Transverse colon (tissue), 4 donors: ENCODE measurements at regions of chr9 and their contacts with region 1.

Region 1: GRCh38 chr9:82091610-82092009 is 103.0 kb downstream of the SPATA31D1 start:
- DNase-seq: no peak
- H3K4me3 ChIP-seq: no peak overlapping the region
- H3K27ac ChIP-seq: no peak overlapping the region
- H3K4me1 ChIP-seq: no peaks in the 10 kb centered on the region
- H3K27me3 ChIP-seq: no peaks in the 10 kb centered on the region
- CTCF ChIP-seq: no peak
- EP300 ChIP-seq: no peak
- POLR2A ChIP-seq: no peak

Region 2: GRCh38 chr9:82057805-82058204 is 33.8 kb before region 1 on chr9:
- in situ Hi-C with region 1: no loop called
- intact Hi-C with region 1: no loop called
- DNase-seq: no peak
- H3K4me3 ChIP-seq: no peak overlapping the region
- H3K27ac ChIP-seq: no peak overlapping the region
- H3K4me1 ChIP-seq: no peaks in the 10 kb centered on the region
- H3K27me3 ChIP-seq: no peaks in the 10 kb centered on the region
- CTCF ChIP-seq: no peak
- EP300 ChIP-seq: no peak
- POLR2A ChIP-seq: no peak

Region 3: GRCh38 chr9:82184524-82184923 is 92.9 kb after region 1 on chr9:
- in situ Hi-C with region 1: loop called in 1 of 4 experiments (anchors 25 kb)
- intact Hi-C with region 1: no loop called
- DNase-seq: no peak
- H3K4me3 ChIP-seq: no peak overlapping the region
- H3K27ac ChIP-seq: no peak overlapping the region
- H3K4me1 ChIP-seq: no peaks in the 10 kb centered on the region
- H3K27me3 ChIP-seq: no peaks in the 10 kb centered on the region
- CTCF ChIP-seq: no peak
- EP300 ChIP-seq: no peak
- POLR2A ChIP-seq: no peak